K562 (cell line): ENCODE measurements at regions of chr3 and their contacts with region 1.

Region 1: DNA sequence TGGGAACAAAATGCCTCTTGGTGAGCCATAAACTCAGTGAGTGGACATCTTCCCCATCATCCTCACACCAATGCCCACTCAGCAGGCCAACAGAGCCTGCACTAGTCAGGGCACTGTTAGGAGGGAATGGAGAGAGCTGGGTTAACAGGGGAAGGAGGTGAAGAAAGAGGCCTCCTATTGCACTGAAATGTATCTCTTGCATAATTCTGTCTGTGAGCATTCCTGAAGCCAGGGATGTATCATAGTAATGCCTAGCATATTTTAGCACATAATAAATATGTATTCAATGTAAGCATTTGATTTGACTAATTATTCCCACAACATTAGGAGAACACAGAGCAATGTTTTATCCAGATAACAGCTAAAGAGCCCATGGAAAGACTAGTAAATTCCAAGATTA is 81.2 kb downstream of the ANO10 start:
- DNase-seq: no peak
- ATAC-seq: no peak
- H3K4me3 ChIP-seq: no peak overlapping the region
- H3K27ac ChIP-seq: no peak overlapping the region
- H3K4me1 ChIP-seq: peaks cover 7 to 13% of the 10 kb centered on the region in 2 experiments; a peak in 2 of 5 replicates
- H3K27me3 ChIP-seq: no peaks in the 10 kb centered on the region
- CTCF ChIP-seq: no peak
- EP300 ChIP-seq: no peak
- POLR2A ChIP-seq: no peak
- RAD21 ChIP-seq: no peak

Region 2: DNA sequence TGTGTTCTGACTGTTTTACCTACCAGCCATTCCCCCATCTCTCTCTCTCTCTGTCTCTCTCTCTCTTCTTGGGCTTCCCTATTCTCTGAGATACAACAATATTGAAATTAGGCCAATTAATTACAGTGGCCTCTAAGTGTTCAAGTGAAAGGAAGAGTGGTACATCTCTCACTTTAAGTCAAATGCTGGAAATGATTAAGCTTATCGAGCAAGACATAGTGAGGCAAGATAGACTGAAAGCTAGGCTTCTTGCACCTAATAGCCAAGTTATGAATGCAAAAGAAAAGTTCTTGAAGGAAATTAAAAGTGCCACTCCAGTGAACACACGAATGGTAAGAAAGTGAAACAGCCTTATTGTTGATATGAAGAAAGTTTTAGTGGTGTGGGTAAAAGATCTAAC is 233.0 kb before region 1 on chr3:
- CTCF ChIA-PET with region 1: no interaction called
- POLR2A ChIA-PET with region 1: no interaction called
- in situ Hi-C with region 1: no loop called
- intact Hi-C with region 1: no loop called
- DNase-seq: no peak
- ATAC-seq: no peak
- H3K4me3 ChIP-seq: no peak overlapping the region
- H3K27ac ChIP-seq: no peak overlapping the region
- H3K4me1 ChIP-seq: no peaks in the 10 kb centered on the region
- H3K27me3 ChIP-seq: no peaks in the 10 kb centered on the region
- CTCF ChIP-seq: no peak
- EP300 ChIP-seq: no peak
- POLR2A ChIP-seq: no peak
- RAD21 ChIP-seq: no peak

Region 3: DNA sequence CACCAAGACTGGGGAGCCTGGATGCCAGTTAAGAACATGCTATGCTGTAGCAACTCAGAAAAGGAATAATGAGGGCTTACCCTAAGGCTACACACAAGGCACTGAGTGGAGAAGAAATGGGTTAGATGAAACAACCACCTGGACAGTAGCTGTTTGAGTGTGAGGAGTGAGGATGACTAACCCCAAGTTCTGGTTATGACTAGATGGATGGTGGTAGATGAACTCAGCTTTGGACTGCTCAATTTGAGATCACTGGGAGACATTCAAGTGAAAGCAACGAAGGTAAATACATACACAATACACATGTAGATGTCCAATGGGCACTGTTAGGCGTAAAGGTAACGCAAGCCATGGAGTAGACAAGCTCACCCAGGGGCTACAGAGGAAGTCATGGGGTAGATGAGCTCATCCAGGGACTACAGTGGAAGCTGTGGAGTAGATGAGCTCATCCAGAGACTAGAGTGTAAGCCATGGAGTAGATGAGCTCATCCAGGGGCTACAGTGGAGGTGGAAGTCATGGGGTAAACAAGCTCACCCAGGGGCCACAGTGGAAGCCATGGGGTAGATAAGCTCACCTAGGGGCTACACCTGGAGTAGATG is 17.1 kb before region 1 on chr3:
- CTCF ChIA-PET with region 1: no interaction called
- POLR2A ChIA-PET with region 1: interaction called, 14 read pairs
- in situ Hi-C with region 1: no loop called
- intact Hi-C with region 1: no loop called
- DNase-seq: peak; percentile 19 to 55 (median 35)
- ATAC-seq: peak; percentile 84
- H3K4me3 ChIP-seq: no peak overlapping the region
- H3K27ac ChIP-seq: peak overlapping the region; percentile 84
- H3K4me1 ChIP-seq: peaks cover 10 to 22% of the 10 kb centered on the region in 2 experiments
- H3K27me3 ChIP-seq: no peaks in the 10 kb centered on the region
- CTCF ChIP-seq: no peak
- EP300 ChIP-seq: no peak
- POLR2A ChIP-seq: no peak
- RAD21 ChIP-seq: no peak

Region 4: DNA sequence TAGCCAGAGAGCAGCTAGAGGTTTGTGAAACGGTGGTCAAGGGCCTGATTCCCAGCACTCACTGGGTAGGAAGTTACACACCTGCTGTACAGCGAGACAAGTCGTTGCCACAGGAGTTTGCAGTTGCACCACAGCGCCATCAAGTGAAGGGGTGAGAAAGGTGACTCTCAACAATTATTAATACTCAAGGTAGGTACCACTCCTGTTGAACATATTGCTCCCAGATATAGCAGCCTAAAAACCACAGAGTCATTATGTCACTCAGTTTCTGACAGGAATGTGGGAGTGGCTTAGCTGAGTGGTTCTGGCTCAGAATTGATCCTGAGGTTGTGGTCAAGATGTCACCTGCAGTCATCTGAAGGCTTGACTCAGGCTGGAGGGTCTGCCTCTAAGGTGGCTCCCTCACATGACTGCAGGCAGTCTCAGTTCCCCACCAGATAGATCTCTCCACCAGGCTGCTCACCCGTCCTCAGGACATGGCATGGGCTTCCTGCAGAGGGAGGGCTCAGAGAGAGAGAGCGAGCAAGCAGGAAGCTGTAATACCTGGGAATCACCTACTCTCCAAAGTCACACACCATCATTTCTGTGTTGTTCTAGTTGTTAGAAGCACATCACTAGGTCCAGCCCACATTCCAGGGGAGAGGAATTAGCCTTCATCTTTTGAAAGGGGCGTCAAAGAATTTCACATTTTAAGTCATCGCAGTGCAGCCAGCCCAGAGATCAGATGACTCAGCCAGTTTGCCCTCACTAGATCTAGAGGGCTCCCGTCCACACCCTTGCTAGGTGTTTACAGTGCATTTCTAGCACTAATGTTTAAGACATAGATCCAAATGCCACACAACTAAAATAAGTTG is 98.2 kb after region 1 on chr3:
- CTCF ChIA-PET with region 1: interaction called, 5 read pairs
- POLR2A ChIA-PET with region 1: interaction called, 4 read pairs
- in situ Hi-C with region 1: loop called (anchors 5 kb)
- intact Hi-C with region 1: loop called (anchors 1 kb)
- DNase-seq: peak; percentile 66 to 92 (median 75)
- ATAC-seq: peak; percentile 90
- H3K4me3 ChIP-seq: 0 out of 2 replicates have a peak overlapping the region, but pooled peaks have one; percentile 1
- H3K27ac ChIP-seq: peak overlapping the region; percentile 67
- H3K4me1 ChIP-seq: peaks cover 10 to 24% of the 10 kb centered on the region in 2 experiments; a peak in 4 of 5 replicates
- H3K27me3 ChIP-seq: no peaks in the 10 kb centered on the region
- CTCF ChIP-seq: peak; percentile 88 to 97 (median 92)
- EP300 ChIP-seq: peak; percentile 45
- POLR2A ChIP-seq: no peak
- RAD21 ChIP-seq: peak; percentile 89 to 97

Region 5: DNA sequence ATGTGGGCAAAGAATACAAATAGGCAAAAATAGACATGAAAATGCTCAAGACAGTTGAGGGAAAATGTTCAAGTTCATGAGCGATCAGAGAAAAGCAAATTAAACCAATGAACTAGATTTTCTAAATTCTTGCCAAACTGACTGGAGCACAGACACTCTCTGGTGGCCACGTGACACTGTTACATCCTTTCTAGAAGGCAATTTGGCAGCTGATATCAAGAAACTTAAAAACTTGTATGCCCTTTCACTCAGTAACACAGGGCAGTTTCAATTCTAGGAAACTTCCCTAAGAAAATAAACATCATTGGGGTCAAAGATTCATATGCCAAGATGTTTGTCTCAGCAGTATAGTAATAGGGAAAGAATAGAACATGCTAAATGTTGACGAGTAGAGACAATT is 202.3 kb after region 1 on chr3:
- CTCF ChIA-PET with region 1: no interaction called
- POLR2A ChIA-PET with region 1: no interaction called
- in situ Hi-C with region 1: no loop called
- intact Hi-C with region 1: loop called (anchors 5 kb)
- DNase-seq: no peak
- ATAC-seq: 0 out of 3 replicates have a peak, but pooled peaks have one; percentile 23
- H3K4me3 ChIP-seq: no peak overlapping the region
- H3K27ac ChIP-seq: no peak overlapping the region
- H3K4me1 ChIP-seq: no peaks in the 10 kb centered on the region; a peak in 1 of 5 replicates
- H3K27me3 ChIP-seq: peaks cover 0 to 5% of the 10 kb centered on the region in 2 experiments; a peak in 2 of 5 replicates
- CTCF ChIP-seq: peak; percentile 16 to 46 (median 20); a peak in 2 of 6 replicates
- EP300 ChIP-seq: no peak
- POLR2A ChIP-seq: no peak
- RAD21 ChIP-seq: peak in 1 of 2 experiments; percentile 63; a peak in 2 of 4 replicates

Region 6: GRCh38 chr3:43759297-43759782 is 218.7 kb after region 1 on chr3:
- CTCF ChIA-PET with region 1: no interaction called
- POLR2A ChIA-PET with region 1: no interaction called
- in situ Hi-C with region 1: no loop called
- intact Hi-C with region 1: loop called (anchors 1 kb)
- DNase-seq: peak in 2 of 4 experiments; percentile 49 to 50
- ATAC-seq: peak; percentile 84
- H3K4me3 ChIP-seq: no peak overlapping the region
- H3K27ac ChIP-seq: no peak overlapping the region
- H3K4me1 ChIP-seq: peaks cover 0 to 8% of the 10 kb centered on the region in 2 experiments; a peak in 3 of 5 replicates
- H3K27me3 ChIP-seq: no peaks in the 10 kb centered on the region; a peak in 1 of 5 replicates
- CTCF ChIP-seq: peak; percentile 55 to 69 (median 62)
- EP300 ChIP-seq: no peak
- POLR2A ChIP-seq: no peak
- RAD21 ChIP-seq: peak; percentile 47 to 68

Region 7: GRCh38 chr3:44198284-44199269 is 658.0 kb after region 1 on chr3:
- CTCF ChIA-PET with region 1: no interaction called
- POLR2A ChIA-PET with region 1: no interaction called
- in situ Hi-C with region 1: loop called (anchors 25 kb)
- intact Hi-C with region 1: loop called (anchors 1 kb)
- DNase-seq: peak; percentile 62 to 84 (median 72)
- ATAC-seq: peak; percentile 99
- H3K4me3 ChIP-seq: no peak overlapping the region
- H3K27ac ChIP-seq: no peak overlapping the region
- H3K4me1 ChIP-seq: no peaks in the 10 kb centered on the region; a peak in 1 of 5 replicates
- H3K27me3 ChIP-seq: peaks cover 0 to 7% of the 10 kb centered on the region in 2 experiments; a peak in 2 of 5 replicates
- CTCF ChIP-seq: peak; percentile 84 to 95 (median 88)
- EP300 ChIP-seq: no peak
- POLR2A ChIP-seq: no peak
- RAD21 ChIP-seq: peak; percentile 90 to 92